Heart left ventricle (tissue), 16 donors: ENCODE measurements at regions of chr16 and their contacts with region 1.

Region 1: DNA sequence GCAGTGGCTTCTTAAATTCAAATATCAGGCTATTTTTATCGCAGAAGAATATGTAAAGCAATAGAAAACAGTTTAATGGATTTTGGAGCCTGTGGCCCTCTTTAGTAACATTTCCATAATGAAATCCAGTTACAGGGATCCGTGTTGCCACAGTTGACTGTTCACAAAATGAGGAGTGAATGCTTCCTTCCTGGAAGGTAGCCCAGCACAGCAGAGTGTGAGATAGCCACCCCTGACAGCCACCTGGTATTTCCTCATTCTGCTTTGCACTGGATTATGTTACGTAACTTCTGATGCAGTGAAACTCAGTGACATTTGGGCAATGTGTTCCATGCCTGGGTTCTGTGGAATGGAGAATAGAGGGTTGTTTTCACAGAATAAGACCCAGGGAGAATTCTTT is 517.2 kb downstream of the RBFOX1 start:
- DNase-seq: no peak
- ATAC-seq: no peak
- H3K4me3 ChIP-seq: no peak overlapping the region
- H3K27ac ChIP-seq: no peak overlapping the region
- H3K4me1 ChIP-seq: no peaks in the 10 kb centered on the region
- H3K27me3 ChIP-seq: peaks cover 0 to 7% (median 0%) of the 10 kb centered on the region in 9 donors
- CTCF ChIP-seq: no peak
- POLR2A ChIP-seq: no peak

Region 2: DNA sequence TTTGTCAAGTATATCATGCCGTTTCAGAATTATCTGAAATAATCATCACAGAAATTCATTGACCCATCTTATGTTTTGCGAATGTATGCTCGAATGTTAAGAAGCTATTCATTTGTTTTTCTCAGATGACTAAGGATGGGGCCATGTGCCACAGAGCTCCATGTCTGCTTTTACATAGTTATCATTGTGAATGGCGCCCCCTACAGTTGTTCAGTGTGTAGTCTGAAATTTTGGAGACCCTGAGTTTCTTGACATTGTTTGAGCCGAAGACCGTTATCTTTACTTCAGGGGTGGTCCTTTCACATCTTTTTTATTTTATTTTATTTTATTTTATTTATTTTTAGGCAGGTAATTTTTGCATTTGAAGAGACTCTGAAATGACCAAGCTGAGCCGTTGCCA is 1489.2 kb before region 1 on chr16:
- intact Hi-C with region 1: no loop called
- DNase-seq: no peak
- ATAC-seq: no peak
- H3K4me3 ChIP-seq: no peak overlapping the region
- H3K27ac ChIP-seq: no peak overlapping the region
- H3K4me1 ChIP-seq: no peaks in the 10 kb centered on the region
- H3K27me3 ChIP-seq: no peaks in the 10 kb centered on the region
- CTCF ChIP-seq: peak in 1 of 12 donors; percentile 6
- POLR2A ChIP-seq: no peak

Region 3: GRCh38 chr16:7792346-7792745 is 57.5 kb before region 1 on chr16:
- intact Hi-C with region 1: loop called in 1 of 10 experiments (anchors 10 kb)
- DNase-seq: no peak
- ATAC-seq: no peak
- H3K4me3 ChIP-seq: no peak overlapping the region
- H3K27ac ChIP-seq: no peak overlapping the region
- H3K4me1 ChIP-seq: no peaks in the 10 kb centered on the region
- H3K27me3 ChIP-seq: peaks cover 0 to 6% (median 0%) of the 10 kb centered on the region in 9 donors
- CTCF ChIP-seq: no peak
- POLR2A ChIP-seq: no peak